ENCODE measurements at regions of chr5 and their contacts with region 1.

Region 1: GRCh38 chr5:98816582-98817222 is 43.2 kb downstream of the RGMB start:
- DNase-seq: peak; percentile 62
- H3K4me3 ChIP-seq: no peak overlapping the region
- H3K27ac ChIP-seq: no peak overlapping the region
- H3K4me1 ChIP-seq: peaks cover 0 to 5% (median 0%) of the 10 kb centered on the region in 4 donors
- H3K27me3 ChIP-seq: no peaks in the 10 kb centered on the region
- CTCF ChIP-seq: no peak
- EP300 ChIP-seq: no peak
- POLR2A ChIP-seq: no peak

Region 2: GRCh38 chr5:97224112-97224750 is 1592.5 kb before region 1 on chr5:
- in situ Hi-C with region 1: loop called in 2 of 4 experiments (anchors 25 kb)
- intact Hi-C with region 1: no loop called
- DNase-seq: no peak
- H3K4me3 ChIP-seq: no peak overlapping the region
- H3K27ac ChIP-seq: no peak overlapping the region
- H3K4me1 ChIP-seq: no peaks in the 10 kb centered on the region
- H3K27me3 ChIP-seq: no peaks in the 10 kb centered on the region
- CTCF ChIP-seq: no peak
- EP300 ChIP-seq: no peak
- POLR2A ChIP-seq: no peak

Region 3: DNA sequence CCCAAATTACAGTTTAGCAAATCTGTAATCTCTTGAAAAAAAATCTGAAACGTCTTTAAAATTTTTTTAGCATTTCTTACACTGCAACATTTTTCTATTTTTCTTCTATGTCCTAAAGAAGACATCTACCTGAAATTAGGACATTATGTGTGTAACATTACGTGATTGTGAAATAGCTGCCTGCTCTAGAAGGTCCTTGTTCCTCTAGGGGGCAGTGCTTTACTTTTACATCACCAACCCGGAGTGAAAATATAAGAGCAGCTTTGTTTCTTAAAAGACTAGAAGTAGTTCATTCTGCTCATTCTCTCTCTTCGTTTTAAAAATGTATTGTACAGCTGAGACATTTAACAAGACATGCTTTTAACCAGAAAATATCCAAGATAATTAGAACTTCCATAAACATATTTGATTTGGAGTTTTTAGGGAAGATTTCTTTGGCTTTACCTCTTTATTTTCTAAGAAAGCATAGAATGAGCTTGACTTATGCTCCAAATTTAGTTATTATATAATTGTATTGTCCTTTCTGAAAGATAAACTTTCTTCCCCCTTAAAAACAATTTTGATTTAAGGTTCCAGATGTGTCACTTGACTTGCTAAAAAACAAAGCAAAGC is 1585.6 kb before region 1 on chr5:
- in situ Hi-C with region 1: loop called in 1 of 4 experiments (anchors 25 kb)
- intact Hi-C with region 1: no loop called
- DNase-seq: peak; percentile 18
- H3K4me3 ChIP-seq: no peak overlapping the region
- H3K27ac ChIP-seq: no peak overlapping the region
- H3K4me1 ChIP-seq: peaks cover 0 to 4% (median 1%) of the 10 kb centered on the region in 4 donors
- H3K27me3 ChIP-seq: no peaks in the 10 kb centered on the region
- CTCF ChIP-seq: peak; percentile 70 to 75 (median 74)
- EP300 ChIP-seq: no peak
- POLR2A ChIP-seq: no peak

Region 4: GRCh38 chr5:98144710-98145109 is 672.0 kb before region 1 on chr5:
- in situ Hi-C with region 1: no loop called
- intact Hi-C with region 1: no loop called
- DNase-seq: no peak
- H3K4me3 ChIP-seq: no peak overlapping the region
- H3K27ac ChIP-seq: no peak overlapping the region
- H3K4me1 ChIP-seq: no peaks in the 10 kb centered on the region
- H3K27me3 ChIP-seq: no peaks in the 10 kb centered on the region
- CTCF ChIP-seq: no peak
- EP300 ChIP-seq: no peak
- POLR2A ChIP-seq: no peak

Measured in transverse colon (tissue), 4 donors.